ENCODE measurements at regions of chr7 and their contacts with region 1.

Region 1: DNA sequence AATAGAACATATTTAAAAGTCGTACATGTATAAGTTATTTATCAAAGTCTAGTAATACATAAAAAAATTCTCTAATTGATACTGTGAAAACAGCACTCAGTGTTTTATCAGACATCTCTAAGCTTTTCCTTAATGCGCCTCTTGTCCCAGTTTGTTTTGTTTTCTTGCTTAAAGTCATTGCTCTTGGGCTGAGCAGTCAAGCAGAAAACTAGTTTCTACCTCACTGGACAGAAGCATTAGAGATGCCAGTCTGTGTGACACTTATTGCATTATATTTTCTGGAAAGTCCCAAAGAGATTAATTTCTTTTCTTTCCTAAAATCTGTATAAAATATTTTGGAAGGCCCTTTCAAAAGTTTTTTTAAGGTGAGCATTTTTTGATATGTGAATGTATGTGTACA is 236.2 kb downstream of the PCLO start:
- DNase-seq: no peak
- H3K4me3 ChIP-seq: no peak overlapping the region
- CTCF ChIP-seq: no peak
- POLR2A ChIP-seq: no peak

Region 2: GRCh38 chr7:83394776-83395175 is 468.3 kb after region 1 on chr7:
- intact Hi-C with region 1: no loop called
- DNase-seq: no peak
- H3K4me3 ChIP-seq: no peak overlapping the region
- CTCF ChIP-seq: no peak
- POLR2A ChIP-seq: no peak

Region 3: DNA sequence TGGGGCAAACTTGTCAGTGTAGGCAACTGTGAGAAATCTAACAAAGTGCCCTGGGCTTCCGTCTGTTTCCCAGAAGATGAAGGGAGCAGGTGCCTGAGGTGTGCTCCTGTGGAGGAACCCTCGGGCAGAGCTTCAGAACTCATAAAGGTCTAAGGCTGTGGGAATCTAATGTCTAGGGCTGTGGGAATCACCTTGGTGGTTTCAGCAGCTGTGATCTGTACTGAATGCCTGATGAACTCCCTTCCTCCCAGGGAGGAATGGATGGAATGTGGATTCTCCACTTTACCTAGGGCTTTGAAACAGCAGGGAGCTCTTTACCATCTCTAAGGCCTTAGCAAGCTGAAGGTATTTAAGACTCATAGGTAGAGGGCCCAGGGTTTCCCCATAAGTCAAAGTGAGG is 758.4 kb after region 1 on chr7:
- intact Hi-C with region 1: loop called (anchors 5 kb)
- DNase-seq: no peak
- H3K4me3 ChIP-seq: no peak overlapping the region
- CTCF ChIP-seq: no peak
- POLR2A ChIP-seq: no peak